Activated CD4-positive, alpha-beta T cell treated with anti-CD3 and anti-CD28 coated beads, Interleukin-2, amount 10 ng/mL, durations not matched to agents 24 days and 14 days (primary cell): ENCODE measurements at regions of chrX and their contacts with region 1.

Region 1: GRCh38 chrX:72126539-72127140 is 5.1 kb downstream of the RTL5 start:
- DNase-seq: peak; percentile 94
- H3K4me3 Mint-ChIP-seq: no peak overlapping the region
- H3K27ac Mint-ChIP-seq: no peak overlapping the region
- H3K4me1 Mint-ChIP-seq: peaks cover 18% of the 10 kb centered on the region
- H3K27me3 Mint-ChIP-seq: peaks cover 55% of the 10 kb centered on the region

Region 2: GRCh38 chrX:71998836-71999509 is 127.7 kb before region 1 on chrX:
- intact Hi-C with region 1: loop called (anchors 1 kb)
- DNase-seq: peak; percentile 75
- H3K4me3 Mint-ChIP-seq: no peak overlapping the region
- H3K27ac Mint-ChIP-seq: no peak overlapping the region
- H3K4me1 Mint-ChIP-seq: no peaks in the 10 kb centered on the region
- H3K27me3 Mint-ChIP-seq: peaks cover 33% of the 10 kb centered on the region

Region 3: DNA sequence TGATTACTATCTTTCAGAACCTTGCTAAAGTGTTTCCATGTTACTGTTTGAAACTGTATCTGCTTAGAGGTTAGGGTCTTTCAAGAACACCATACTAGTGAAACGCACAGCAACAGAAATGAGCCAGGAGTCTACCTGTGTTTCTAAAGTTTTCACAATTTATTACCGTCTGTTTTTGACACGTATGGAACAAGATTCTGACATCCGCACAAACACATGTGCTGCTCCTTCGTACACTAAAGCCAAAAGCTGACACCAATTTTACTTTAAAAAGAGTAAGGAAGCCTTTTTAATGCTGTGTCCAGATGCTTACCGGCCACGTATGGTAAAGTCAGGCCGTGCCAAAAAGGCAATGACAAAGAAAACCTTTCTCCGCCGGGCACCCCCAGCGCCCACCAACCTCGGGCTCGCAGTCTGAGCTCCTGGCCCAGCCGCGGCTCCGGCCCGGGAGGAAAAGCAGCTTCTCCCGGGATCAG is 149.9 kb after region 1 on chrX:
- intact Hi-C with region 1: loop called (anchors 1 kb)
- DNase-seq: no peak
- H3K4me3 Mint-ChIP-seq: peak overlapping the region; percentile 85
- H3K27ac Mint-ChIP-seq: peak overlapping the region; percentile 86
- H3K4me1 Mint-ChIP-seq: peaks cover 30% of the 10 kb centered on the region
- H3K27me3 Mint-ChIP-seq: peaks cover 10% of the 10 kb centered on the region